ENCODE measurements at regions of chr11 and their contacts with region 1.

Region 1: DNA sequence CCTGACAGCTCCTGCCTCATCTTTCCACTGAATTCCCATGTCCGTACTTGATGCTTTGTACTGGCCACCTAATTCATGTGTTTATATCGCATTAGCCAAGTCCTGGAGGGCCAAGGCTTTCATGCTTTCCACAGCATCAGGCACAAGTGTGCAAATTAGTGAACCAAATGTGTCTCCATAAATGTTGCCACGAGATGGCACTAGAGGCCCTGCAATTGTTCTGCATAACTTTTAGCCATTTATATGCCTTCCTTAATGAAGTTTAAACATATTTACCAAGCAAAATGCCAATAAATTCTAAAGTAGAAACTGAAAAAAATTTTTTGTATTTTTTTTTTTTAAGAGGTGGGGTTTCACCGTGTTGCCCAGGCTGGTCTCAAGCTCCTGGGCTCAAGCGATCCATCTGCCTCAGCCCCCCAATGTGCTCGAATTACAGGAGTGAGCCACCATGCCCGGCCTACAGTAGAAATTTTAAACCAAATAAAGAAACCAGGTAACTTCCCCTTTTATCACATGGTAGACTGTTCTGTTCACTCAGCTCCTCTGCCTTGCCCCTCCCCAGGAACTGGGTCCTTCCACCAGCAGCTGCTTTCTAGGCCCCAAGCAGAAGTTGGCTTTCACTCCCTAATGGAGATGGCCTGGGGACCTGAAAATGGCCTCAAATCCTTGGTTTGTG is 20.8 kb upstream of the IL18BP start:
- DNase-seq: peak; percentile 62 to 75 (median 68)
- H3K4me3 ChIP-seq: no peak overlapping the region
- H3K4me3 Mint-ChIP-seq: no peak overlapping the region
- H3K27ac ChIP-seq: peak overlapping the region; percentile 49 to 52
- H3K27ac Mint-ChIP-seq: peak overlapping the region; percentile 70 to 93 (median 81)
- H3K4me1 ChIP-seq: peaks cover 7 to 11% of the 10 kb centered on the region in 2 donors
- H3K4me1 Mint-ChIP-seq: peaks cover 8% of the 10 kb centered on the region
- H3K27me3 ChIP-seq: no peaks in the 10 kb centered on the region
- H3K27me3 Mint-ChIP-seq: peaks cover 0 to 3% (median 0%) of the 10 kb centered on the region in 3 donors
- CTCF ChIP-seq: peak; percentile 75

Region 2: DNA sequence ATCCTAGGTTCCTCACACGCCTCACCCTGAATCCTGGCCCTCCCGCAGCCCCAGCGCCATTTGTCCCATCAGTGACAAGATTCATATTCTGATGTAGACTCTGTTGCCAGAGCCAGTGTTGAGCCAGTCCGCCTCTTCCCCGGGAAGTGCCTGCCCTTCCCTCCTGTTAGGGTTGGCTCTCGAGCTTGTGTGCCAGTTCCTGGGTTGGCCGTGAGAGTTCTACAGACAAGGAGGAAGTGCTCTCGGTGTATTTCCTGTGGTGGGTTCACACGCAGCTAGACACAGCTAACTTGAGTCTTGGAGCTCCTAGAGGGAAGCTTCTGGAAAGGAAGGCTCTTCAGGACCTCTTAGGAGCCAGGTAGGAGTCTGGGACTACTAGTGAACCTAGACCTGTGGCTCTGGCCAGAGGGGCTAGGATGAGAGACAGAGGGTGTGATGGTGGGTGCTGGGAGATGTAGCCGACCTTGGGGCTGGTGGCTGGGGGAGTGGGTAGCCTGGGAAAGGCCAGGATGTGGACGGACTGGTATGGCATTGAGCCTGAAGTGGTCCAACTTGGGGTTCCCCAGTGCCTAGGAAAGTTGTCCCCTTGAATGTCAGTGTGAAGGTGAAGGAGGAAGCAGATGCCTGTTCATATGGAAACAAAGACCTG is 20.9 kb after region 1 on chr11 and contains the start of gene IL18BP:
- intact Hi-C with region 1: no loop called
- DNase-seq: peak; percentile 89 to 96 (median 93)
- H3K4me3 ChIP-seq: peak within 1 kb of the TSS in 2 of 3 experiments; percentile 30 to 60
- H3K4me3 Mint-ChIP-seq: peak within 1 kb of the TSS; percentile 78 to 94
- H3K27ac ChIP-seq: peak within 1 kb of the TSS; percentile 86 to 94
- H3K27ac Mint-ChIP-seq: peak within 1 kb of the TSS; percentile 96 to 99 (median 98)
- H3K4me1 ChIP-seq: peaks cover 36 to 37% of the 10 kb centered on the region in 2 donors
- H3K4me1 Mint-ChIP-seq: peaks cover 39% of the 10 kb centered on the region
- H3K27me3 ChIP-seq: no peaks in the 10 kb centered on the region
- H3K27me3 Mint-ChIP-seq: peaks cover 0 to 3% (median 2%) of the 10 kb centered on the region in 3 donors
- CTCF ChIP-seq: no peak
- polyA plus RNA-seq, gene IL18BP: 7.4 to 32.3 (median 8.3) TPM

Region 3: GRCh38 chr11:72015511-72016171 is 37.8 kb after region 1 on chr11:
- intact Hi-C with region 1: loop called (anchors 5 kb)
- DNase-seq: no peak
- H3K4me3 ChIP-seq: no peak overlapping the region
- H3K4me3 Mint-ChIP-seq: no peak overlapping the region
- H3K27ac ChIP-seq: peak overlapping the region in 1 of 2 donors; percentile 14
- H3K27ac Mint-ChIP-seq: peak overlapping the region in 3 of 7 donors; percentile 47 to 75 (median 69)
- H3K4me1 ChIP-seq: no peaks in the 10 kb centered on the region
- H3K4me1 Mint-ChIP-seq: no peaks in the 10 kb centered on the region
- H3K27me3 ChIP-seq: no peaks in the 10 kb centered on the region
- H3K27me3 Mint-ChIP-seq: no peaks in the 10 kb centered on the region
- CTCF ChIP-seq: peak; percentile 21

Measured in CD14-positive monocyte (primary cell).